Right lobe of liver (tissue), 6 donors: ENCODE measurements at regions of chr1 and their contacts with region 1.

Region 1: DNA sequence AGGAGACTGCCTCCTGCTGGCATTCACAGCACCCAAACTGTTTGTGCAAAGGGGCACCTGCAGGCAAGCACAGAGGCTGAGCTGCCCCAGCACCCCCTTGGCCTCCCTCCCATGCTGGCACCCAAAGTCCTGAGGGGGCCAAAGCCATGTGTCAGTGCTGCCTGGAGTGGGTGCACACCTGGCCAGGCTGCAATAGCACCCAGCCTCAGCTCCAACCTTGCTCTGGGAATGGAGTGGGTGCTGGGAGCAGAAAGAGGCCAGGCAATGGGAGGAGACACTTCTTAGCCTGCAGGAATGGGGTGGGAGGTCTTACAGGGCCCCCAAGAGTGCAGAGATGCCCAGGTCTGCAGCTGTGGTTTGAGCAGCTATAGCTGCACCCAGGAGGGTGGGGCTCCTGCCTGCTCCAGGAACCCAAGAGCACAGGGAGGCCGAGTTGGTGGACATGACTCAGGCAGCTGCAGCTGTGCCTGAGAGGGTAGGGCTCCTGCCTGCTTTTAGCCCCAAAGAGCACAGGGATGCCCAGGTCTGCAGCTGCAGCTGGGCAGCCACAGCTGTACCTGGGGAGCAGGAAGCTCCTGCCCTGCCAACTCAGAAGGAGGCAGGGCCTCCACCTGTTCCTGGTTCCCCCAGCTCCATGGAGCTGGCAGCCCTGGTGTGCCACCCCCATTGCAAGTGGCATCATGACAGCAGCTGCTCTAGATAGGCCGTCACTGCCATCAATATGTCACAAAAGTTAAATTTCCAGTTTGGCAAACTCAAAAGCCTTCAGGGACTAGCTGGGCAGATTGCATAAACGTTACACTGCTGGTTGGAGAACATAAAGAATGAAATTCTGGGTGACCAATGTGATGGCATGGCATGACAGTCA is 5.3 kb upstream of the CHD1L start:
- DNase-seq: peak; percentile 41 to 71 (median 67)
- ATAC-seq: peak; percentile 9 to 29 (median 28)
- H3K4me3 ChIP-seq: no peak overlapping the region
- H3K27ac ChIP-seq: peak overlapping the region; percentile 33 to 94 (median 91)
- H3K4me1 ChIP-seq: peaks cover 0 to 66% (median 23%) of the 10 kb centered on the region in 4 donors
- H3K27me3 ChIP-seq: no peaks in the 10 kb centered on the region
- CTCF ChIP-seq: no peak
- POLR2A ChIP-seq: no peak

Region 2: GRCh38 chr1:147172168-147172992 is 64.8 kb before region 1 on chr1 and contains the start of gene PRKAB2:
- intact Hi-C with region 1: loop called in 1 of 2 experiments (anchors 5 kb)
- DNase-seq: peak; percentile 96 to 97 (median 96)
- ATAC-seq: peak; percentile 86 to 94 (median 90)
- H3K4me3 ChIP-seq: peak within 1 kb of the TSS; percentile 82 to 91 (median 86)
- H3K27ac ChIP-seq: peak within 1 kb of the TSS; percentile 91 to 93 (median 92)
- H3K4me1 ChIP-seq: peaks cover 0 to 27% (median 3%) of the 10 kb centered on the region in 4 donors
- H3K27me3 ChIP-seq: no peaks in the 10 kb centered on the region
- CTCF ChIP-seq: peak; percentile 97 to 99 (median 98)
- POLR2A ChIP-seq: peak; percentile 78
- total RNA-seq, gene PRKAB2: 10.8 to 54.0 (median 25.9) TPM

Region 3: DNA sequence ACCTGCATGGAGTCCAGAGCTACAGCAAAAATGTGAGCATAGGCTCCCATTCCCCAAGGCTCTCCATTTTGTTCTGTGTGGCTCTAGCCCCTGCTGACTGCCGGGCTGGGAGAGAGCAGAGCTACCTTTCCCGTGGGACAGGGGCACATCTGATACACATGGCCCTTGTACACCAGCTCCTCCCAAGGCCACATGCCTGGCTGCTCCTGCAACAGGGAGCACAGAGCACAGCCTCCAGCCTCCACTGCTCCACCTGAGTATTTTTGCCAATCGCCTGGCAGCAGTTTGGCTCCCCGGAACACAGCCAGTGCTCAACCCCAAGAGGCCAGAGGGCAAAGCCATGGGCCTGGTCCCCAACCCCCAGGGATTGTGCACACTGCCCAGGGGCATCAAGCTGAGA is 151.8 kb after region 1 on chr1:
- intact Hi-C with region 1: no loop called
- DNase-seq: no peak
- ATAC-seq: peak in 1 of 4 donors; percentile 39
- H3K4me3 ChIP-seq: no peak overlapping the region
- H3K27ac ChIP-seq: no peak overlapping the region
- H3K4me1 ChIP-seq: no peaks in the 10 kb centered on the region
- H3K27me3 ChIP-seq: no peaks in the 10 kb centered on the region
- CTCF ChIP-seq: no peak
- POLR2A ChIP-seq: no peak